SK-N-SH (cell line): ENCODE measurements at regions of chr2 and their contacts with region 1.

Region 1: DNA sequence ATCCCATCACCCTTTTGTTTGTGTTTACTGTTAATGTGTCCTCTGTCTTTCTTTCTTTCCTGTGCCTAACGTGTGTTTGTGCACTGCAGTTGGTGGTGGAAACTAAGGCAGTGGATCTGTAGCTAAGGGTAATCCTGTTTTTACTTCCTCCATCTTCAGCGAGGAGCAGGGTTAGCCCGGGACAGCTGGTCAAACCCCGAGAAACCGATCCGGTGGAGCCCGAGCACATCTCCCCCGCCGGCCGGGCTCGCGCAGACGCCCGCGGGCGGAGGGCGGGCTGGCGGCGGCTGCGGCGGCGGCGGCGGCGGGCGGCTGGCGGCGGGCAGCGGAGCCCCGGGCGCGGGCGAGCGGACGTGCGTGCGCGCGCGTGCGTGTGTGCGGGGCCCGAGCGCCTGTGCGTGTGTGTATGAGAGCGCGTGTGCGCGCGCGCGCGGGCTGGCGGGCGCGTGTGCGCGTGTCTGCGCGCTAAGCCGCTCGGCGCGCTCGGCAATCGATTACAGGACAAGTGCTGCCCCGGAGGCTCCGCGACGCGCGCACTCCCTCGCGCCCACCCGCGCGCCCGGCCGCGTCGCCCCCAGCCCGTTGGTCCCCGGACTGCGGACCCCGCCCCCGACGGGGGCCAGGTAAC is at the start of gene IKZF2:
- DNase-seq: peak; percentile 88
- H3K4me3 ChIP-seq: peak within 1 kb of the TSS; percentile 84 to 85
- H3K27ac ChIP-seq: peak within 1 kb of the TSS; percentile 90 to 95
- H3K4me1 ChIP-seq: peaks cover 4 to 5% of the 10 kb centered on the region in 2 experiments
- H3K27me3 ChIP-seq: no peaks in the 10 kb centered on the region
- CTCF ChIP-seq: no peak
- EP300 ChIP-seq: no peak
- RAD21 ChIP-seq: no peak
- polyA plus RNA-seq, gene IKZF2: 1.3 and 1.4 TPM in 2 replicates

Region 2: DNA sequence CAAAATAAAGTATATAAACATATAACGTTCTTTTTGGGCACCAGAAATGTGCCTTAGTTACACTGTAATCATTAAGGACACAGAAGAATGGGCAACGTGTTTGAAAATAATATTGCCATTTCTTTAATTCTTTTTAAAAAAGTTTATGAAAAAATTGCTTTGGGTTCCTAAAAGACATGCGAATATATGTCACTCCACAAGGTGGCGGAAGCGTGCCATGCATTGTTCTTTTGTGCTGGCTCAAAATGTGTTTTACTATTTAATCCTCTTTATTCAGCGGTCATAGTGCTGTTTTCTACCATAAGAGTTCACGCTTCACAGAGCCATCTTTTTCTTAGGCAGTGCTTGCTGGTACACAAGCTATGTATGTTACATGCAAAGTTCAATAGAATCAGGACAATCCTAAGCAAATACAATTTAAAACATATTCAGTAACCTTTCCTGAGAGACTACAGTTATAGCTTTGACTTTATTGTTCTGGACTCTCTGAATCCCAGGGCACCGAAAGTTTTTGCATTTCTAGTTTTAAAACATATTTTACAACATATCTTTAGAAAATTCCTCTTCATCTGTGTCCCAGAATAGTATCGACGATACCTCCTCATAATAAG is 465.2 kb before region 1 on chr2:
- CTCF ChIA-PET with region 1: interaction called, 18 read pairs
- POLR2A ChIA-PET with region 1: no interaction called
- DNase-seq: peak; percentile 53
- H3K4me3 ChIP-seq: no peak overlapping the region; a peak in 1 of 4 replicates
- H3K27ac ChIP-seq: no peak overlapping the region
- H3K4me1 ChIP-seq: no peaks in the 10 kb centered on the region; a peak in 3 of 4 replicates
- H3K27me3 ChIP-seq: no peaks in the 10 kb centered on the region
- CTCF ChIP-seq: peak; percentile 93
- EP300 ChIP-seq: no peak
- RAD21 ChIP-seq: peak; percentile 95

Region 3: DNA sequence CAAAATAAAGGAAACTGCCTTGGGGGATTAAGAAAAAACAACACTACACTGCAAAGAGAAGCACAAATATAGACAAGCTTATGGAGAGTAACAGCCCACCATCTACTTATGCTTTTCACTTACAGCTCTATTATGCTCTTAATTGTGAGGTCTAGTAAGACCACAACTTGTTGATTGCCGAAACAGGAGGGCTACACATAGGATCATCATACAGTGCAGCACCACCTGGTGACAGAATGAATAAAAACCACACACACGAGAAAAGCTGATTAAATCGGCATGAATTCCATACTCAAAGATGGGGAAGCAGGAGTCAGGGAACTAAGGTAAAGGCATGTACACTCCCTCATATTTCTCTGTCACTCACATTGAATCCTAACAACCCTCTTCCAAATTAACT is 259.4 kb before region 1 on chr2:
- CTCF ChIA-PET with region 1: interaction called, 18 read pairs
- POLR2A ChIA-PET with region 1: no interaction called
- DNase-seq: peak; percentile 34
- H3K4me3 ChIP-seq: no peak overlapping the region
- H3K27ac ChIP-seq: no peak overlapping the region
- H3K4me1 ChIP-seq: no peaks in the 10 kb centered on the region; a peak in 1 of 4 replicates
- H3K27me3 ChIP-seq: no peaks in the 10 kb centered on the region
- CTCF ChIP-seq: peak; percentile 57
- EP300 ChIP-seq: no peak
- RAD21 ChIP-seq: peak; percentile 57